ENCODE measurements at regions of chr4 and their contacts with region 1.

Region 1: GRCh38 chr4:159016593-159017024 is 86.3 kb upstream of the RAPGEF2 start:
- DNase-seq: peak; percentile 62
- CTCF ChIP-seq: peak; percentile 46

Region 2: DNA sequence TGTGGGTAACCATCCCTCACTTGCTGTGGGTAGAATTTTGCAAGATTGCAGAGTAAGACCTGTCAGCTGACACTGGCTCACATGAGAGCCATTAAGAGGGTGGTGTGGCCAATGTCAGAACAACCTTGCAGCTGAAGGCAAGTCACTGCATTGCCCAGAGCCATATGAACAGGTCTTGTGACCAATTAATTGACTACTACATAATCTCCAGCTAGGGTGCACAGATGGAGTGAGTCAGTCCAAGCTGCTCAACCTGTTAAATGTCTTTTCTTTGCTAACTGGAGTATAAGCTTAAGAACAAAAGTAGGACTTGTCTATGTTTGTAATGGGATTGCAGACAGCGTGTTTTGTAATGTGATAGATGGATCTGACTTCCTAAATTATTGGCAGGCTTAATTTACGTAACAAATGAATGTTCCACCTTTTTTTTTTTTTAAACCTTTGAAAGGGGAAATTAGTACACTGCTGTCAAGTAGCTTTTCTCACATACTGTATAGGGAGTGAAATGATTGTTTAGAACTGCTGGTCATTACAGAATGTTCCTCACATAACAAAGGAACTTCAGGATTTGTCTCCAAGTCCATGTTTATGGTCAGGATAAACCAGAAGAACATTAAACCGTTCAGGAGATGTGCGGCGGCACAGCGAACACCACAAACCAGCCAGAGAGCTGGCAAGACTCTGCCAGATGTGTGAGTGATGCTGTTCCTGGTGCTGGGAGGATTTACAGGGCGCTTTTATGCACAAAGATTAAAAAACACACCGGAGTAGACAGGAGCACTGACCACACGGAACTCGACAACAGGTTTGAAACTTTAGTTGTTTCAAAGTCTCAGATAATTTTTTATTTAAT is 210.8 kb before region 1 on chr4:
- CTCF ChIA-PET with region 1: no interaction called
- POLR2A ChIA-PET with region 1: no interaction called
- DNase-seq: no peak
- CTCF ChIP-seq: no peak

Region 3: DNA sequence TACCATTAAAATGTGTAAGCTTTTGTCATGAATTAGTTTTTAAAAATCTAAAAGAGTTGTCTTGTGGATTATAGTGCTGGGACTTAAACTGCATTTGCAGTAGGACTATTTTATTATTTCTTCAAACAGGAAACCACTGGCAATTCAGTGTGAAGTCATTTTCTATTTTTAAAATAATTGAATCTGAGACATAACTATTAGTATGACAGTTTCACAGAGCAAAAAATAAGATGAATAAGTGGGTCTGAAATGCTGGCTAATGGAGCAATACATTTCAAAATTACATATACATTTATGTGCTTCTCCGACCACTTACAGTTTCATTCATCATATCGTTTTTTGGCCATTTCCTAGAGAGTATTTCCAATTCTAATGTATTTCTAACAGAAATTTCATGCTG is 10.9 kb after region 1 on chr4:
- CTCF ChIA-PET with region 1: interaction called, 17 read pairs
- POLR2A ChIA-PET with region 1: no interaction called
- DNase-seq: no peak
- CTCF ChIP-seq: no peak